Transverse colon (tissue), 4 donors: ENCODE measurements at regions of chr16 and their contacts with region 1.

Region 1: GRCh38 chr16:11133344-11133943 is 122.6 kb downstream of the SOCS1 start:
- DNase-seq: peak; percentile 60
- H3K4me3 ChIP-seq: no peak overlapping the region
- H3K27ac ChIP-seq: peak overlapping the region; percentile 46 to 79 (median 52)
- H3K4me1 ChIP-seq: peaks cover 10 to 35% (median 14%) of the 10 kb centered on the region in 4 donors
- H3K27me3 ChIP-seq: no peaks in the 10 kb centered on the region
- CTCF ChIP-seq: no peak
- EP300 ChIP-seq: no peak
- POLR2A ChIP-seq: no peak

Region 2: DNA sequence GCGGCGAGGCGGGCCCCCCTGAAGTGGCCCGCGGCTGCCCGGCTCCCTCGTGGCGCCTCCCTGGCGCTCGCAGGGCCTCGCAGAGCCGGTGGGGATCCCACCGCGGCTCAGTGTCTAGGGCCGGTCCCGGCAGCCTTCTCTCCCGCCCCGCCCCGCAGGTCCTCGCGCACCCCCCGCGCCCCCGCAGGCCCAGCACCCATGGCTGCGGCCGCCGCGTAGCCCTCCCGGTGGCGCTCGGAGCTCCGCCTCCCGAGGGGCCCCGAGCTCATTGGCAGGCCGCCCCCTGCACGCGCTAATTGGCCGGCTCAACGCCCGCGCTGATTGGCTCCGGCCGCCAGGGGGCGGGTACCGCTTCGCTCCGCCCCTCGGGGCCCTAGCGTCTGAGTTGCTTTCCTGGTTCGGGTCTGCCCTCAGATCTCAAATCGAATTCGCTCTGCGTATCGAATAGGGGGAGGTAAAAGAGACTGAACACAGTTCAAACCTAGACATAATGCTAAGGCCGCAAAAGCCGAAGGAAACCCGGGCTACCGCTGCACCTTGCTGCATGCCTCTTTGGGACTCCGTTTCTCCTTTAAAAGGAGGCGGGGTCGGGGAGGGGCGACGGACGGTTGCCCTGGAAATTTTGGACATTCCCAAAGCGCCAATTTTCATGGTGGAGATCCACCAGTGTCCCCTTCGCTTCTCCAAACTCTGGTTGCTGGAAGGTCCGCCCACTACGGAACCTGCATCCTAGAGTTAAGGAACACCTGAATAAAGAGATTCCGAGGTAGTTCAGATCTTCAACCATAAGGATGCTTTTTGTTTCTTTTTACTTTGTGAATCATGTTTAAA is 191.0 kb before region 1 on chr16 and contains the start of gene DEXI:
- in situ Hi-C with region 1: no loop called
- intact Hi-C with region 1: no loop called
- DNase-seq: peak; percentile 96
- H3K4me3 ChIP-seq: peak within 1 kb of the TSS; percentile 73 to 96 (median 91)
- H3K27ac ChIP-seq: peak within 1 kb of the TSS; percentile 87 to 89 (median 88)
- H3K4me1 ChIP-seq: peaks cover 35 to 77% (median 65%) of the 10 kb centered on the region in 4 donors
- H3K27me3 ChIP-seq: no peaks in the 10 kb centered on the region
- CTCF ChIP-seq: peak; percentile 20 to 34 (median 30)
- EP300 ChIP-seq: no peak
- POLR2A ChIP-seq: peak; percentile 65
- total RNA-seq, gene DEXI: 36.2 to 76.4 (median 56.0) TPM

Region 3: DNA sequence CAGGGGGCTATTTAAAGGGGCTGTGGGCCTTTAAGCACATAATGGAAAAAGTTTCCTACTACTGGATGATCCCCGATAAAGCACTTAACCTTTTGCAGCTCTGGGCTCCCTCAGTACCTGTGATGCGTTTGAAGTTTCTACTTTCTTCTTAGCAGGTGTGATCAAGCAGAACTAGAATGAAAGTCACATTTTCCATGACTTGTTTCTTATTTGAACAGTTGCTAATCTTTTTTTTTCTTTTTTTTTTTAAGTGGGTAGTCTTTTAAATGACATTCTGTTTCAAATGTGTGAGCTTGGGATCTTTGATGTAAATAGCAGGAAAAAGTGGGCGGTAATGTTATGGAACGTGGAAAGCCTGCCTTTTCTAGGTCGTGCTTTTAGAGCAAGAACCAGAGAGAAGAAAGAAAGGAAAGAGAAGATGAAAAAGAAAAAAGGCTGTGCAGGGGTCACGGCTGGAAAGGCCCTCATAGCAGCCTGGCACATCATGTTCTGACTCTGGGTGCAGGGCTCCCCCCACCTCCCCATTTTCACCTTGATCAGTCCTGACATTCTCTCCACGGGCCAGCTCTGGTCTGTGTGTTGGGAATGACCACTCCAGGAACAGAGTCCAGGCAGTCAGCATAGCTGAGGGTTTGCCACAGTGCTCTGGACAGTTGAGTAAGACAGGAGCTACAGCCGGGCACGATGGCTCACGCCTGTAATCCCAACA is 38.4 kb before region 1 on chr16:
- in situ Hi-C with region 1: no loop called
- intact Hi-C with region 1: loop called (anchors 5 kb)
- DNase-seq: no peak
- H3K4me3 ChIP-seq: no peak overlapping the region
- H3K27ac ChIP-seq: peak overlapping the region; percentile 45 to 67 (median 54)
- H3K4me1 ChIP-seq: peaks cover 16 to 32% (median 17%) of the 10 kb centered on the region in 4 donors
- H3K27me3 ChIP-seq: no peaks in the 10 kb centered on the region
- CTCF ChIP-seq: no peak
- EP300 ChIP-seq: no peak
- POLR2A ChIP-seq: no peak